Activated naive CD4-positive, alpha-beta T cell treated with anti-CD3 and anti-CD28 coated beads, Interleukin-2, amount 10 ng/mL, durations not matched to agents 7 days and 5 days (primary cell): ENCODE measurements at regions of chr10 and their contacts with region 1.

Region 1: GRCh38 chr10:94320285-94320914 is 42.3 kb downstream of the NOC3L start:
- DNase-seq: peak; percentile 75
- H3K4me3 Mint-ChIP-seq: no peak overlapping the region
- H3K27ac Mint-ChIP-seq: no peak overlapping the region
- H3K4me1 Mint-ChIP-seq: no peaks in the 10 kb centered on the region
- H3K27me3 Mint-ChIP-seq: no peaks in the 10 kb centered on the region

Region 2: GRCh38 chr10:93916257-93917063 is 403.9 kb before region 1 on chr10:
- CTCF ChIA-PET with region 1: interaction called, 21 read pairs
- DNase-seq: no peak
- H3K4me3 Mint-ChIP-seq: no peak overlapping the region
- H3K27ac Mint-ChIP-seq: no peak overlapping the region
- H3K4me1 Mint-ChIP-seq: no peaks in the 10 kb centered on the region
- H3K27me3 Mint-ChIP-seq: no peaks in the 10 kb centered on the region

Region 3: DNA sequence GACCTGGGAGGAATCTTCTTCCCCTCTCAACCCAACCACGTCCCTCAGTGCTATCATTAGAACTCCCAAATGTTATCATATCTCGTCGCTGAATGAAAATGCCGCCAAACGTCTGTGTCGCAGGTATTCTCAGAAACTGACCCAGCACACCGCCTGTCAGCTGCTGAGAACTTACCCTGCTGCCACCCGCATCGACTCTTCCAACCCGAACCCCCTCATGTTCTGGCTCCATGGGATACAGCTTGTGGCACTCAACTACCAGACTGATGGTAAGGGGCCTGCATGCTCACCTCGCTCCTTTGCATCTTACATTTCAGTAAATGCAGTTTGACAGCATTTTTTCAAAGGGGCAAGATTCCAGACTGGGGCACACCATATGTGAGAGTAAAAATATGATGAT is 22.0 kb before region 1 on chr10:
- CTCF ChIA-PET with region 1: no interaction called
- DNase-seq: no peak
- H3K4me3 Mint-ChIP-seq: no peak overlapping the region
- H3K27ac Mint-ChIP-seq: no peak overlapping the region
- H3K4me1 Mint-ChIP-seq: peaks cover 19% of the 10 kb centered on the region
- H3K27me3 Mint-ChIP-seq: peaks cover 49% of the 10 kb centered on the region

Region 4: DNA sequence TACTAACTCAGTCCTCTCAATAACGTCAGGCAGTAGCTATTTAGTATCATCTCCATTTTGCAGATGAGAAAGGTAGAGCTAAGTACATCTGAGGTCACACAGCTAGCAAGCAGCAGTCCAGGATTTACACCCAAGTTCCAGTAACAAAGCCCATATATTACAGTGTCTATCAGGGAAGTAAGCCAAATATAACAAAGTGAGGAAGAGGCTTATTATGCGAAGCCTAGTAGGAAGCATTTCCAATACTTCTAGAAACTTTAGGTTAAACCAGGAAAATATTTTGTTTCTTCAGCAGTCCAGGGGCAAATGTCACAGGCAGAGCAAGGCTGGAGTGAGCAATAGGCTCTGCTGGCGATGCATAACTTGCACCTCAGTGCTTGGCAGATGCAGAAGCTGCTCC is 11.5 kb before region 1 on chr10:
- CTCF ChIA-PET with region 1: interaction called, 12 read pairs
- DNase-seq: no peak
- H3K4me3 Mint-ChIP-seq: no peak overlapping the region
- H3K27ac Mint-ChIP-seq: no peak overlapping the region
- H3K4me1 Mint-ChIP-seq: no peaks in the 10 kb centered on the region
- H3K27me3 Mint-ChIP-seq: peaks cover 37% of the 10 kb centered on the region

Region 5: GRCh38 chr10:94334857-94335256 is 14.5 kb after region 1 on chr10:
- CTCF ChIA-PET with region 1: interaction called, 26 read pairs
- DNase-seq: no peak
- H3K4me3 Mint-ChIP-seq: no peak overlapping the region
- H3K27ac Mint-ChIP-seq: peak overlapping the region; percentile 24
- H3K4me1 Mint-ChIP-seq: no peaks in the 10 kb centered on the region
- H3K27me3 Mint-ChIP-seq: no peaks in the 10 kb centered on the region